Esophagus muscularis mucosa (tissue), 4 donors: ENCODE measurements at regions of chr1 and their contacts with region 1.

Region 1: DNA sequence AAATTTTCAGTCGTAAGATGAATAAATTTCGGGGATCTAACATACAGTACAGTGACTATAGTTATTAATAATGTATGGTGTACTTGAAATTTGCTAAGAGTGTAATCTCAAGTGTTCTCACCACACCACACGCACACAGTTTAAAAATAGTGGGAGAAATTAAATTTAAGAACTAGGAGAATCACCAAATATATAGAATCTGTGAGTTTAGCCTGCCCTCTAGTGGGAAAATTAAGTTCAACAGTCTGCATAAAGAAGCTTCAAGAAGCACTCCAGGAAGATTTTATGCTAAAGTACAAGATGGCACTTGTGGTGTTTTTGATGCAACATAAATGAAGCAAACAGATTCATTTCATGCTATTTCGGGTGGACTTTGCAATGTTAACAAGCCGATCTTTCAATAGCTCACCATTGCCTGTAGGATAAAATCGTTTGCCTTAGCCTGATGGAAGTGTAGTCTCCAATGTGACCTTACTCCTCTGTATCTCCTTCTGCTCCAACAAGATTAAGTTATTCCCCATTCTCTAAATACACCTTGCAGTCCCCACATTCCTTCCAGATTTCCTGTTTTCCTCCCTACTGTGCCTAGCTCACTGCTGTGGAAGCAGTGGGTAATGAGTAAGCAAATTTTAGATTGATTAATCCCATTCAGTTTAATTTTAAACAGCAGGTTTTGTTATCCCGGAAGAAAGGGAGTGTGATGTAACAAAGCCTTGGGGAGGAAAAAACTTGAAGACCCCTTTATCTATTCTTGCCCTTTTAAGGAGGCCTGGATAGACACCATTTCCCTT is 8.7 kb upstream of the PIK3C2B start:
- DNase-seq: no peak
- H3K4me3 ChIP-seq: no peak overlapping the region
- H3K27ac ChIP-seq: no peak overlapping the region
- H3K4me1 ChIP-seq: peaks cover 7 to 25% (median 22%) of the 10 kb centered on the region in 4 donors
- H3K27me3 ChIP-seq: no peaks in the 10 kb centered on the region
- CTCF ChIP-seq: peak; percentile 83 to 84 (median 83)
- EP300 ChIP-seq: no peak
- POLR2A ChIP-seq: no peak

Region 2: GRCh38 chr1:204431310-204432165 is 71.8 kb before region 1 on chr1:
- intact Hi-C with region 1: loop called (anchors 5 kb)
- DNase-seq: peak; percentile 95
- H3K4me3 ChIP-seq: no peak overlapping the region
- H3K27ac ChIP-seq: peak overlapping the region in 3 of 4 donors; percentile 32 to 39 (median 36)
- H3K4me1 ChIP-seq: peaks cover 19 to 28% (median 25%) of the 10 kb centered on the region in 4 donors
- H3K27me3 ChIP-seq: no peaks in the 10 kb centered on the region
- CTCF ChIP-seq: peak; percentile 84 to 94 (median 85)
- EP300 ChIP-seq: no peak
- POLR2A ChIP-seq: no peak

Region 3: GRCh38 chr1:204989266-204990058 is 486.1 kb after region 1 on chr1:
- intact Hi-C with region 1: no loop called
- DNase-seq: no peak
- H3K4me3 ChIP-seq: no peak overlapping the region
- H3K27ac ChIP-seq: peak overlapping the region; percentile 20 to 60 (median 38)
- H3K4me1 ChIP-seq: peaks cover 0 to 16% (median 10%) of the 10 kb centered on the region in 4 donors
- H3K27me3 ChIP-seq: no peaks in the 10 kb centered on the region
- CTCF ChIP-seq: peak; percentile 87 to 96 (median 89)
- EP300 ChIP-seq: no peak
- POLR2A ChIP-seq: no peak